H1 (cell line): ENCODE measurements at regions of chr18 and their contacts with region 1.

Region 1: GRCh38 chr18:31512203-31512764 is 14.3 kb downstream of the DSG2 start:
- DNase-seq: no peak
- H3K4me3 ChIP-seq: no peak overlapping the region
- H3K27ac ChIP-seq: no peak overlapping the region
- H3K4me1 ChIP-seq: peaks cover 0 to 14% (median 6%) of the 10 kb centered on the region in 4 experiments; a peak in 4 of 7 replicates
- H3K27me3 ChIP-seq: no peaks in the 10 kb centered on the region
- CTCF ChIP-seq: no peak
- EP300 ChIP-seq: no peak
- POLR2A ChIP-seq: no peak
- RAD21 ChIP-seq: no peak

Region 2: GRCh38 chr18:31487246-31488015 is 24.9 kb before region 1 on chr18:
- CTCF ChIA-PET with region 1: no interaction called
- POLR2A ChIA-PET with region 1: no interaction called
- DNase-seq: no peak
- H3K4me3 ChIP-seq: no peak overlapping the region
- H3K27ac ChIP-seq: no peak overlapping the region
- H3K4me1 ChIP-seq: no peaks in the 10 kb centered on the region
- H3K27me3 ChIP-seq: no peaks in the 10 kb centered on the region
- CTCF ChIP-seq: no peak
- EP300 ChIP-seq: no peak
- POLR2A ChIP-seq: no peak
- RAD21 ChIP-seq: no peak

Region 3: DNA sequence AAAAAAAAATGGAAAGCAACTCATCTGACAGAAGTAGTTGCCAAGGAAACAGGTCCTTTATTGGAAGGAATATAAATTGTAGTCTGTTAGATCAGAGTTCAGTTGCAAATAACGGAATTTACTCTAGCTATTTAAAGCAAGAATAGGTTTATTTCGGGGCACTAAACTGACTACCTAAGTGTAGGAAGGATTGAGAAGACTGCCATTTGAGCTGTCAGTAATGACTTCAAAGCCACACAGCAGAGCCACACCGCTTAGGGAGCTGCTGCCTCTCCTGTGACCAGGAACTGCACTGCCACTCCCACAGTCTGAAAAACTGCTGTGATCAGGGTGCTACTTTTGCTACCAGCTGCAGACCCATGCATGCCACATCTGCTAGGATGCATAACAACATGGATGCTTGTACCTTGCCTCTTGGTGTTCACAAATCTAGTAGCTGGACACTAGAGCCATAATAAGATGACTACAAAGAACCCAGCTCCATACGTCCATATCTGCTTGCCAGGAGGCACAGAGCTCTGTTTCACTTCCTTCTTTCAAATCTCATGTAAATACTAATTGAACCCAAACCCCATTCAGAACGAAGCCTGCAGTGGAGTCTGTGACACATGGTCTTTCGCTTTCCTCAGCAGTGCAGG is 12.1 kb before region 1 on chr18:
- CTCF ChIA-PET with region 1: interaction called, 12 read pairs
- POLR2A ChIA-PET with region 1: interaction called, 6 read pairs
- DNase-seq: no peak
- H3K4me3 ChIP-seq: peak overlapping the region in 1 of 4 experiments; percentile 94; a peak in 2 of 8 replicates
- H3K27ac ChIP-seq: no peak overlapping the region
- H3K4me1 ChIP-seq: peaks cover 2 to 10% (median 5%) of the 10 kb centered on the region in 4 experiments; a peak in 5 of 7 replicates
- H3K27me3 ChIP-seq: peaks cover 0 to 1% (median 0%) of the 10 kb centered on the region in 4 experiments; a peak in 1 of 7 replicates
- CTCF ChIP-seq: no peak
- EP300 ChIP-seq: no peak
- POLR2A ChIP-seq: no peak
- RAD21 ChIP-seq: no peak